Right cardiac atrium (tissue), 5 donors: ENCODE measurements at regions of chr2 and their contacts with region 1.

Region 1: DNA sequence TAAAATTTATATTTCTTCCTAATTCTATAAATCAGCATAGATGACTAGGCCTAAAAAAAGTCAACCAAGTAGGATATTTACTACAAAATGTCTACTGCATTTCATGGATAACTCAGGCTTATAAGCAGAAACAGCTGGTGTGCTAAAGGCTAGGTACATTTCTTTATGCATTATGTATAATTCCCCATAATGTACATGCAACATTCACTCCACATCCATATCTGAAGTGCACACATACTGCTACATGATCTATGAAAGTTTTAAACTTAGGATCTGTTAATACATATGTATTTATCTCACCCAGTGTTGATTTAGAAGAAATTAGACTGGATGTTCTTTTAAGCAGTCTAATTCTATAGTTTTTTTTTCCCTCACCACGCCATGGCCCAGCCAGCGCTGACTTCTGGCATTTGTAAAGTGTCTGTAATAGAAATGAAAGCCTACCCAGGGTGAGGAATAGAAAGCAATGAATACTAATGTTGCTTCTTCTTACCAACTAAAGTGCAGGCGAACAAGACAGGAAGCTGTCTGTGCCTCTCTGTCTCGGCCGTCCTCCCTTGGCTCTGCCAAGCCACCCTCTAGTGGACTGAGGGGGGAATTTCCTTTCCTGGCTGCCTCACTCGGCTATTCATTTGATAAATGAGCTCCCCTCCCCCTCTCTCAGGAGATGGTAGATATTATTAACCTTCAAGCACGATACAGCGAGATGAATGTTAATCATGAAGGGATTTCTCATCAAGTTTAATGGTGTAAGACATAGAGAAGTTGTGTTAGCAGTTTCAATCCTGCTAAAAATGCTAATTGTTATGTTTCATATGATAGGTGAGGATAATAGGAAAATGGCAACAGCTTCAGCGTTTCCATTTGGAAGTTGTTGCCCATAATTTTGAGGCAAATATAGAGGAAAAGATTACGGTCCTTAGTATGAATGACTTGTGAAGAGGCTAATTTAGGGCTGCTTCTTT is 384.5 kb downstream of the MTX2 start:
- DNase-seq: peak; percentile 68 to 79 (median 76)
- ATAC-seq: peak; percentile 84 to 88
- H3K4me3 ChIP-seq: no peak overlapping the region
- H3K27ac ChIP-seq: no peak overlapping the region
- H3K4me1 ChIP-seq: no peaks in the 10 kb centered on the region
- H3K27me3 ChIP-seq: peaks cover 4% of the 10 kb centered on the region

Region 2: GRCh38 chr2:176814306-176815052 is 160.7 kb after region 1 on chr2:
- intact Hi-C with region 1: loop called (anchors 5 to 10 kb)
- DNase-seq: no peak
- ATAC-seq: no peak
- H3K4me3 ChIP-seq: no peak overlapping the region
- H3K27ac ChIP-seq: no peak overlapping the region
- H3K4me1 ChIP-seq: no peaks in the 10 kb centered on the region
- H3K27me3 ChIP-seq: no peaks in the 10 kb centered on the region

Region 3: GRCh38 chr2:176947754-176948153 is 294.0 kb after region 1 on chr2:
- intact Hi-C with region 1: no loop called
- DNase-seq: no peak
- ATAC-seq: no peak
- H3K4me3 ChIP-seq: no peak overlapping the region
- H3K27ac ChIP-seq: no peak overlapping the region
- H3K4me1 ChIP-seq: no peaks in the 10 kb centered on the region
- H3K27me3 ChIP-seq: no peaks in the 10 kb centered on the region